ENCODE measurements at regions of chr11 and their contacts with region 1.

Region 1: DNA sequence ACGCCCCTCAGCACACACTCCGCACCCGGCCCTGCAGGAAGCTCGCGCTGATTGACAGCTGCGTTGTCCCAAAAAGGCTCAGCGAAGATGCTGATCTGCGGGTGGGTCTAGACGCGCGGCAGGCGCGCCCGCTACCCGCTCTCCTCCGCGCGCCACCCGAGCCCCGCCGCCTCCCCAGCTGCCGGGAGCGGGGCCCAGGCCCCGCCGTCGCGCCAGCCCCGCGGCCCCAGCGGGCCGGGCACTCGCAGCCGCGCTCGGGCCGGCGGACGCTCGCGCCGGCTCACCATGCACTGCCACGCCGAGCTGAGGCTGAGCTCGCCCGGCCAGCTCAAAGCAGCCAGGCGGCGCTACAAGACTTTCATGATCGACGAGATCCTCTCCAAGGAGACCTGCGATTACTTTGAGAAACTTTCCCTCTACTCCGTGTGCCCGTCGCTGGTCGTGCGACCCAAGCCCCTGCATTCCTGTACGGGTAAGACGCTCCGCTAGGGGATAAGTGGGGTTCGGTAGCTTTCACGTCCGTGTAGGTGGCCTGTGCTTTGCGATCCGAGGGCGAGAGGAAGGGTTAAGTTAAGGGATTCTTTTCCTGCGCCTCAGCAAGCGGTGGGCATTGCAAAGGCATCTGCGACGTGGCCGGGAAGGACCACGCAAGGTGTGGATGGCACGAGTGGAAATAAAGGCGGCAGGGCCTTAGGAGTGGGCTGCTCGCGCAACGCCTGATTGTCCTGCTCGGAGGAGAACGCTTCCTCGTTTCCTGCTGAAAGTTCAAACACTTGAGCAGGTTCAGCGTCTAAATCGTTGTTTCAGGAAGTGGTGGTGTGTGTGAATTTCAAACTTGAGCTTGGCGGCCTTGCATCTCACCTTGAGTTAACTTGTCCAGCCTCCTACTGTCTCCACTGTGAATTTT is at the start of gene BARX2:
- DNase-seq: peak; percentile 88 to 90
- H3K4me3 ChIP-seq: peak within 1 kb of the TSS; percentile 50
- H3K4me3 Mint-ChIP-seq: peak within 1 kb of the TSS; percentile 77
- H3K27ac Mint-ChIP-seq: peak within 1 kb of the TSS; percentile 27
- H3K4me1 ChIP-seq: 0 out of 2 replicates have a peak, but pooled peaks cover 6% of the 10 kb centered on the region
- H3K4me1 Mint-ChIP-seq: peaks cover 6% of the 10 kb centered on the region
- H3K27me3 ChIP-seq: peaks cover 6% of the 10 kb centered on the region
- H3K27me3 Mint-ChIP-seq: peaks cover 30% of the 10 kb centered on the region
- CTCF ChIP-seq: peak; percentile 71 to 96
- total RNA-seq, gene BARX2: 0.82 and 1.1 TPM in 2 replicates

Region 2: GRCh38 chr11:129302386-129303101 is 73.5 kb before region 1 on chr11:
- CTCF ChIA-PET with region 1: no interaction called
- POLR2A ChIA-PET with region 1: no interaction called
- intact Hi-C with region 1: no loop called
- DNase-seq: no peak
- H3K4me3 ChIP-seq: no peak overlapping the region
- H3K4me3 Mint-ChIP-seq: no peak overlapping the region
- H3K27ac Mint-ChIP-seq: no peak overlapping the region
- H3K4me1 ChIP-seq: no peaks in the 10 kb centered on the region
- H3K4me1 Mint-ChIP-seq: no peaks in the 10 kb centered on the region
- H3K27me3 ChIP-seq: no peaks in the 10 kb centered on the region
- H3K27me3 Mint-ChIP-seq: no peaks in the 10 kb centered on the region
- CTCF ChIP-seq: no peak

Region 3: DNA sequence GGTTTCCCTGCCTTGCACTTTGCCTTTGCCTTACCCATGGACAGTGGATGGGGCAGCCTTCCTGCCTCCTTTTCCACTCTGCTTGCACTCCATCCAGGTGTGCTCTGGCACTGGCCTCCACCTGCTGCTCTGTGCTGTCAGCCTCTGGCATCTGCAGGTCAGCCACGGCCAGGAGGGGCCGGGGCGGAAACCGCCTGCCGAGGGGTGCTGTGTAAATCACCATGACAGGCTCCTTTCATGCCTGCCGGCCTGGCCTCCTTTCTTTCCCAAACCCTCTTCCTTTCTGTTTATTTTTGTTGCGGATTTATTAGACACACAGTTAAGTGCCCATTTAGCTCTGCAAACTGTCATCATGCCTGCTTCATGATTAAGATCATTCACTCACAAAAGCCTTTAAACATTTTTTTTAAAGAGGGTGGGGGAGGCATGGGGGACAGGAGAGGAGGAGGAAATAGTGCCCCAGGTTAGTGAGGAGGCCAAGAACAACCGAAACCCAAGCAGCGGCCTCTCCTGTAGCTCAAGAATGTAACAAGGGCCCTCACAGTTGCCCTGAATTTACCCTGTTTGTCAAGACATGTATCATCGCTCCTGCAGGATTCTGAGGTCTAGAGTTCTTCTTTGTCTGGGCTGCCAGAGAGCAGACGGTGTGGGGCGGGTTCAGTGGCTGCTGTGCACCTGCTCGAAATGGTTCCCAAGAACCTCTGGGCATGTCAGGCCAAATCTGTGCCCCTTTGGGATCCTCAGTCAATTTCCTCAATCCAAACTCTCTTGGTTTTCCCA is 82.9 kb after region 1 on chr11:
- CTCF ChIA-PET with region 1: interaction called, 6 read pairs
- POLR2A ChIA-PET with region 1: no interaction called
- intact Hi-C with region 1: loop called (anchors 1 kb)
- DNase-seq: peak; percentile 78 to 83
- H3K4me3 ChIP-seq: no peak overlapping the region
- H3K4me3 Mint-ChIP-seq: no peak overlapping the region
- H3K27ac Mint-ChIP-seq: peak overlapping the region; percentile 76
- H3K4me1 ChIP-seq: peaks cover 64% of the 10 kb centered on the region
- H3K4me1 Mint-ChIP-seq: peaks cover 62% of the 10 kb centered on the region
- H3K27me3 ChIP-seq: no peaks in the 10 kb centered on the region
- H3K27me3 Mint-ChIP-seq: no peaks in the 10 kb centered on the region
- CTCF ChIP-seq: no peak

Region 4: GRCh38 chr11:129613071-129613470 is 237.1 kb after region 1 on chr11:
- CTCF ChIA-PET with region 1: interaction called, 3 read pairs
- POLR2A ChIA-PET with region 1: no interaction called
- intact Hi-C with region 1: loop called (anchors 1 kb)
- DNase-seq: no peak
- H3K4me3 ChIP-seq: no peak overlapping the region
- H3K4me3 Mint-ChIP-seq: no peak overlapping the region
- H3K27ac Mint-ChIP-seq: no peak overlapping the region
- H3K4me1 ChIP-seq: no peaks in the 10 kb centered on the region
- H3K4me1 Mint-ChIP-seq: no peaks in the 10 kb centered on the region
- H3K27me3 ChIP-seq: no peaks in the 10 kb centered on the region
- H3K27me3 Mint-ChIP-seq: no peaks in the 10 kb centered on the region
- CTCF ChIP-seq: no peak

Region 5: GRCh38 chr11:129695575-129696308 is 319.7 kb after region 1 on chr11:
- CTCF ChIA-PET with region 1: interaction called, 26 read pairs
- POLR2A ChIA-PET with region 1: no interaction called
- intact Hi-C with region 1: loop called (anchors 5 kb)
- DNase-seq: peak; percentile 76 to 83
- H3K4me3 ChIP-seq: no peak overlapping the region
- H3K4me3 Mint-ChIP-seq: no peak overlapping the region
- H3K27ac Mint-ChIP-seq: no peak overlapping the region
- H3K4me1 ChIP-seq: peaks cover 7% of the 10 kb centered on the region; the same call in 1 of the 2 replicates
- H3K4me1 Mint-ChIP-seq: peaks cover 5% of the 10 kb centered on the region
- H3K27me3 ChIP-seq: no peaks in the 10 kb centered on the region
- H3K27me3 Mint-ChIP-seq: no peaks in the 10 kb centered on the region
- CTCF ChIP-seq: peak; percentile 83 to 92